Activated CD4-positive, alpha-beta T cell treated with anti-CD3 and anti-CD28 coated beads for 36 hours (primary cell): ENCODE measurements at regions of chr19 and their contacts with region 1.

Region 1: DNA sequence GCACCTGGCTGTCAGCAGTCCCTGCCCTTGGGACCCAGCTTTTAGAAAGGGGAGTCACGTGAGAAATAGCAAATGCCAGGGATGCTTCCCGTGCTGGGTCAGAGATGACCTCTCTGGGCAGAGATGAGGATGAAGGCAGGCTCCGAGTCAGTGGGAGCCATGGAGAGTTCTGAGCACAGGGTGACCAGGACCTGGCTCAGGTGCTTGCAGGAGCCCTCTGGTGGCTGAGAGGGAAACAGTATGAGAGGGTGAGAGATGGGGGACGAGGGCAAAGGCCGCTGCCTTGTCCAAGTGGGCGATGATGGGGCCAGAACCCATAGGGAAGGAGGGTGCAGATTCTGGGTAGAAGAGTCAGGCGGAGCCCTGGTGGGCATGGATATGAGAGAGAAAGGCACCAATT is 15.8 kb downstream of the TMED1 start:
- DNase-seq: peak; percentile 33
- ATAC-seq: peak; percentile 53
- H3K4me3 Mint-ChIP-seq: no peak overlapping the region
- H3K27ac Mint-ChIP-seq: peak overlapping the region; percentile 39
- H3K4me1 Mint-ChIP-seq: no peaks in the 10 kb centered on the region
- H3K27me3 Mint-ChIP-seq: no peaks in the 10 kb centered on the region

Region 2: DNA sequence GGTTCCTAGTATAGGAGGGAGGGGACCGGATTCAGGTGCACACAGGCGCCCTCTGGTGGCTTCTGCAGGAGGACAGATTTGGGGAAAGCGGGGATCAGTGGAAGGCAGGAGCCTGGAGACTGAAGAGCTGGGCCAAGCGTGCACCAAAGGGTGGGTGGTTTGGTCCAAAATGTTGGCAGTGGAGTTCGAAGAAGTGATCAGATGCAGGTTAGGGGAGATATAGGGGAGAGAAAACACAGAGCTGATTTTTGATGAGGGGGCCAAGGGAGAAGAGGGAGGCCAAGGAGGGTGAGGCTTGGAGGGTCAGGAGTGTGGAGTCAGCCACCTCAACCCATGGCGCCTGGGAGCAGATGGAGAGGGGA is 44.3 kb after region 1 on chr19:
- CTCF ChIA-PET with region 1: interaction called, 17 read pairs
- POLR2A ChIA-PET with region 1: no interaction called
- intact Hi-C with region 1: no loop called
- DNase-seq: peak; percentile 93
- ATAC-seq: peak; percentile 94
- H3K4me3 Mint-ChIP-seq: no peak overlapping the region
- H3K27ac Mint-ChIP-seq: peak overlapping the region; percentile 16
- H3K4me1 Mint-ChIP-seq: peaks cover 14% of the 10 kb centered on the region
- H3K27me3 Mint-ChIP-seq: no peaks in the 10 kb centered on the region